H1 (cell line): ENCODE measurements at regions of chr1 and their contacts with region 1.

Region 1: DNA sequence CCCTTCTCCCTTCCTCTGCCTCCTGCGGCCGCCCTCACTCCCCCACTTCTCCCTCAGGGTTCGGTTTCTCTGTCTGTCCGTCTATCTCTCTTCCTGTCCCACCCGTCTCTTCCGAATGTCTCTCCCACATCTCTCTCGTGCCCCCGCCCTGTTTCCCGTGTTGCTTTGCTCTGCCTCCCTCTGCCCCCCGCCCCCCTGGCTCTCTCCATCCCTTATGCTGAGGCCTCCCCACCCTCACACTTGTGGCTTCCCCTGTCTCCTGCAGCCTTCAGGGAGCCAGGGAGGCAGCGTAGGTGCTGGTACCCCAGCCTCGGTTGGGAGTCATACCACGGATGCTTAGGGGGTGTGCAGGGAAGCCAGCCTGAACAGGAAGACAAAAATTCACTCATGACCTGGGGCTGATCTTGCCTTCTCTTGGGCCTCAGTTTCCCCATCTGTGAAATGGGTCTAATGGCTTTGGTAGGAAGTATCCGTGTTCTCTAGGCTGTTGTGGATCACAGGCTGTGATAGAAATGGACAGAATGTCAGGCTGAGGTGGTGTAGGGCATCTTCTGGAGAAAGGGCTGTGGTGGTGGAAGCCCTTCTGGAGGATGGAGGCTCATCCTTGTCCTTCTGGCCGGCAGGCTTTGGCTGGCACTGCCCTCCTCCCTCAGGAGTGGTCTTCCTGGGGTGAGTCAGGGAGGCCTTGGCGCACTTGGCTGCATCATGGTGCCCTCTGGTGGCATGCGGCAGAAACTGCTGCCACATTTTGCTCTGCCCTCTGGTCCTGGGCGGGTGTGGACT is 55.5 kb downstream of the FOXO6 start:
- DNase-seq: peak; percentile 58 to 87
- H3K4me3 ChIP-seq: no peak overlapping the region
- H3K27ac ChIP-seq: no peak overlapping the region
- H3K4me1 ChIP-seq: peaks cover 0 to 7% (median 1%) of the 10 kb centered on the region in 4 experiments; a peak in 2 of 7 replicates
- H3K27me3 ChIP-seq: no peaks in the 10 kb centered on the region
- CTCF ChIP-seq: peak; percentile 97 to 99 (median 98)
- EP300 ChIP-seq: no peak; a peak in 1 of 3 replicates
- POLR2A ChIP-seq: no peak
- RAD21 ChIP-seq: peak; percentile 98 to 99

Region 2: GRCh38 chr1:41023279-41023990 is 393.3 kb before region 1 on chr1:
- CTCF ChIA-PET with region 1: no interaction called
- POLR2A ChIA-PET with region 1: no interaction called
- DNase-seq: no peak
- H3K4me3 ChIP-seq: no peak overlapping the region
- H3K27ac ChIP-seq: no peak overlapping the region
- H3K4me1 ChIP-seq: peaks cover 0 to 7% (median 4%) of the 10 kb centered on the region in 4 experiments; a peak in 4 of 7 replicates
- H3K27me3 ChIP-seq: peaks cover 0 to 13% (median 6%) of the 10 kb centered on the region in 4 experiments; a peak in 5 of 7 replicates
- CTCF ChIP-seq: peak; percentile 19 to 46 (median 43); a peak in 3 of 4 replicates
- EP300 ChIP-seq: no peak
- POLR2A ChIP-seq: no peak
- RAD21 ChIP-seq: peak; percentile 21 to 40; a peak in 3 of 4 replicates

Region 3: DNA sequence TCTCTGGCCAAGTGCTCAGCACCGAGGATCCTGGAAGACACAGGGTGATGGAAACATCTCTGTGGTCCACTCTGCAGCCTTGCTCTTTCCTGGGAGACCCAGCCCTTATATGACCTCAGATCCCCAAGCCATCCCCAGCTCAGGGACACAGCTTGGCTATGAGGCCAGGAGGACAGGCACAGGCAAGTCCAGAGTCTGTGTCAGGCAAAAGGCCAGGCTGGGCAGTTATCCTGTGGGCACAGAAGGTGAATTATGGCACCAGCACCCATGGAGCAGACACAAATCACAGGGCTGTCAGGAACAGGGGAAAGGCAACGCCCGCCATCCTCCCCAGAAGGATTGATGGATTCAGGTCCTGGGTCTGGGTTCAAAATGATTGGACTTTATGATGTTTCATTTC is 122.5 kb before region 1 on chr1:
- CTCF ChIA-PET with region 1: interaction called, 10 read pairs
- POLR2A ChIA-PET with region 1: interaction called, 3 read pairs
- DNase-seq: no peak
- H3K4me3 ChIP-seq: no peak overlapping the region
- H3K27ac ChIP-seq: no peak overlapping the region
- H3K4me1 ChIP-seq: no peaks in the 10 kb centered on the region
- H3K27me3 ChIP-seq: peaks cover 0 to 2% (median 0%) of the 10 kb centered on the region in 4 experiments; a peak in 1 of 7 replicates
- CTCF ChIP-seq: no peak
- EP300 ChIP-seq: no peak
- POLR2A ChIP-seq: no peak
- RAD21 ChIP-seq: no peak

Region 4: GRCh38 chr1:41322835-41323627 is 93.7 kb before region 1 on chr1:
- CTCF ChIA-PET with region 1: interaction called, 336 read pairs
- POLR2A ChIA-PET with region 1: no interaction called
- DNase-seq: peak; percentile 36 to 80
- H3K4me3 ChIP-seq: no peak overlapping the region
- H3K27ac ChIP-seq: no peak overlapping the region
- H3K4me1 ChIP-seq: peaks cover 0 to 10% (median 6%) of the 10 kb centered on the region in 4 experiments; a peak in 6 of 7 replicates
- H3K27me3 ChIP-seq: no peaks in the 10 kb centered on the region; a peak in 1 of 7 replicates
- CTCF ChIP-seq: peak; percentile 87 to 93 (median 89)
- EP300 ChIP-seq: no peak
- POLR2A ChIP-seq: no peak
- RAD21 ChIP-seq: peak; percentile 94 to 96

Region 5: DNA sequence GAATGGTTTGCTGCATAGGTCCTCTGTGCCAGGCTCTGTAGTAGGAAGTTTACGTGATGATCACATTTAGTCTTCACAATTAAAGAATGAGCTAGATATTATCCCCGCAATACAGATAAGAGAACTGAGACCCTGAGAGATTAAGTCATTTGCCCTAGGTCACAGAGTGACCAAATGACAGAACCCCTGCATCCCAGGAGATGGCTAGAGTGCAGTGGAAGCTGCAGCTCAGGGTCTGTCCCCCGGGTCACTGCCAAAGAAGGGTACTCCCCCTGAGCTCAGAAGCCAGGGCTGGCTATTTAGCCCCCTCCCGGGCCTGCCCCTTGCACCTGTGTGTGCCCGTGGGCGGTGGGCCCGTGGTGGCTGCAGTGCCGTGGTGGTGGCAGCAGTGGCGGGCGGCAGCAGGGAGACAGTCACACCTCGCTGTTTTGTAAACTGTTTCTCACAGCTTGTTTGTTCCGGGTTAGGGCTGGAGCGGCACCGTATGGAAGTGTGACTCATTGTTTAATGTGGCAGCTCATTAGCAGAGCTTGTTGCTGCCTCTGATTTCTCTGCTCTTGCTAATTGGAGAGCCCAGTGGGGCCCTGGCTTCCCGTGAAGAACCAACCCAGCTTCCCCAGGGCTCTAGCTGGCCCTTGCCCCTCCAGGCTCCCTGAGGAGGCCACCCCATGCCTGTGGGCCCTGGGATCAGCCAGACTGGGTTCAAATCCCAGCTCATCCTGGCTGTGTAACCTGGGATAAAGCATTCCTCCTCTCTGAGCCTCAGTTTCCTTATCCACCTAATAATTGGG is 74.8 kb before region 1 on chr1:
- CTCF ChIA-PET with region 1: interaction called, 33 read pairs
- POLR2A ChIA-PET with region 1: no interaction called
- DNase-seq: no peak
- H3K4me3 ChIP-seq: no peak overlapping the region
- H3K27ac ChIP-seq: no peak overlapping the region
- H3K4me1 ChIP-seq: peaks cover 0 to 7% (median 2%) of the 10 kb centered on the region in 4 experiments; a peak in 3 of 7 replicates
- H3K27me3 ChIP-seq: no peaks in the 10 kb centered on the region; a peak in 2 of 7 replicates
- CTCF ChIP-seq: no peak
- EP300 ChIP-seq: no peak
- POLR2A ChIP-seq: no peak
- RAD21 ChIP-seq: no peak

Region 6: DNA sequence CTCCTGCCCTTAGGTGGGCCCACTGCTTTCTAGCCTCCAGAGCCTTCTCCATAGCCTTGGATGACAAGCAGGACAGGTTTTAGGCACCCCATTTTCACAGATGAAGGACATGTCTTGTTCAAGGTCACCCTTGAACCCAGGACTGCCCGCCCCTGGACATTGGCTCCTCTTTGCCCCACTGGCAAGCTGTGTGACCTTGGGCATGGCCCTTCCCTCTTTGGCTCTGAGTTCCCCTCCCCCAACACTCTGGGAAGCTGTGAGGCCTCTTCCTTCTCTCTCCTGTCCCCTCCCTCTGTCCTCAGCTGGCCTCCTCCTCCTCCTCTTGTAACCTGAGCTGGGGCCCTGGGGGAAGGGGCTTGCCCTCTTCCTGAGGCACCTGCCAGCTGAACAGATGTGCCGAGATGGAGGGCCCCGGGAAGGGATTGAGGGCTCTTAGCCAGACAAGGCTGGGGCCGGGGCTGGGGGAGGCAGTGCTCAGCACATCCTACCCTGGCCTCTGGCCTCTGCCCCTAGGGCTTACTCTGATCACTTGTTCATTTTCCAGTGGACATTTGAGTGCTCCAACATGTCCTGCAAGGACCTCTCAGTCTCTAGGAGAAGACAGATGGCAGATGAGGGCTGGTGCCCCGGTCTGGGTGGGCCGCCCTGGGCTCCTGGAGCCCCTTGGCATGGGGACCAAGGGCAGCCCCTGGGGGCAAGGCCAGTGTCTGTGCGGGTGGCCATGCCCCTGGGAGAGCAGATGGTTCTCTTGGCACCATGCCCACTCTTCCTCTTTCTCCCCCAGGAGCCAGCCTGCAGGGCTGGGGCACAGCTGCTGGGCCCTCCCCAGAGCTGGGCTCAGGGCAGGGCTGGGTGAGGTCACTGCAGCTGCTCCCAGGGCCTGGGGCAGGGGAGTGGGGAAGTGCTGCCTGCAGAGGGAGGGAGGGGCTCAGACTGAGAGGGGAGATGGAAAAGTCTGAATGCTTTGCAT is 44.8 kb before region 1 on chr1:
- CTCF ChIA-PET with region 1: interaction called, 39 read pairs
- POLR2A ChIA-PET with region 1: interaction called, 3 read pairs
- DNase-seq: peak; percentile 80 to 85
- H3K4me3 ChIP-seq: peak overlapping the region in 3 of 4 experiments; percentile 20 to 48 (median 42); a peak in 5 of 8 replicates
- H3K27ac ChIP-seq: no peak overlapping the region; the same call in 1 of the 2 replicates
- H3K4me1 ChIP-seq: peaks cover 15 to 45% (median 34%) of the 10 kb centered on the region in 4 experiments
- H3K27me3 ChIP-seq: peaks cover 0 to 19% (median 7%) of the 10 kb centered on the region in 4 experiments; a peak in 4 of 7 replicates
- CTCF ChIP-seq: no peak
- EP300 ChIP-seq: peak in 1 of 2 experiments; percentile 35; a peak in 1 of 3 replicates
- POLR2A ChIP-seq: no peak
- RAD21 ChIP-seq: peak in 1 of 2 experiments; percentile 4; a peak in 1 of 4 replicates

Region 7: DNA sequence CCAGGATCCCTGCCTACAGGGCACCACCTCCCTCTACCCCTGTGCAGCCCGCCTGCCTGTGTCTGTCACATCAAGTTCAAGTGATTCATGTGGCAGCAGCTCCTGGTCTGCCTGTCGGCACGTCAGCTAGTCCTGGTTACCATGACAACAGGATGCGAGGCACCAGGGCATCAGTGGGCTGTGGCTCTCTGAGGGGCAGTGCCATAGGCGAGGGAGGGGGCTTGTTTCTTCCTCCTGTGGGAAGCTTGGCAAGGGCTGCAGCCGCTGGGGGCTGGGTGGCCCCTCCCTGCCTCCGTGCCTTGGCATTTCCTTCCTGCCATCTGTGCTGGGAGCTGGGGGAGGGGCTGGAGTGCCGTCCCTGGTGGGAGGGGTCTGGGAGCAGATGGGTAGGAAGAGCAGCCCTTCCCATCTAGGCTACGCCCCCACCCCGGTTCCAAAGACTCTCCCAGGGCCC is 12.4 kb before region 1 on chr1:
- CTCF ChIA-PET with region 1: interaction called, 247 read pairs
- POLR2A ChIA-PET with region 1: interaction called, 4 read pairs
- DNase-seq: peak in 1 of 2 experiments; percentile 76
- H3K4me3 ChIP-seq: peak overlapping the region in 1 of 4 experiments; percentile 25; a peak in 1 of 8 replicates
- H3K27ac ChIP-seq: no peak overlapping the region
- H3K4me1 ChIP-seq: peaks cover 4 to 27% (median 14%) of the 10 kb centered on the region in 4 experiments
- H3K27me3 ChIP-seq: peaks cover 0 to 5% (median 2%) of the 10 kb centered on the region in 4 experiments; a peak in 4 of 7 replicates
- CTCF ChIP-seq: no peak
- EP300 ChIP-seq: no peak
- POLR2A ChIP-seq: no peak
- RAD21 ChIP-seq: no peak

Region 8: GRCh38 chr1:41573785-41574713 is 157.3 kb after region 1 on chr1:
- CTCF ChIA-PET with region 1: no interaction called
- POLR2A ChIA-PET with region 1: no interaction called
- DNase-seq: peak; percentile 33 to 86
- H3K4me3 ChIP-seq: no peak overlapping the region
- H3K27ac ChIP-seq: no peak overlapping the region
- H3K4me1 ChIP-seq: no peaks in the 10 kb centered on the region; a peak in 2 of 7 replicates
- H3K27me3 ChIP-seq: no peaks in the 10 kb centered on the region; a peak in 1 of 7 replicates
- CTCF ChIP-seq: peak; percentile 87 to 97 (median 94)
- EP300 ChIP-seq: no peak
- POLR2A ChIP-seq: no peak
- RAD21 ChIP-seq: peak; percentile 98 to 99